ENCODE measurements at regions of chr1 and their contacts with region 1.

Region 1: DNA sequence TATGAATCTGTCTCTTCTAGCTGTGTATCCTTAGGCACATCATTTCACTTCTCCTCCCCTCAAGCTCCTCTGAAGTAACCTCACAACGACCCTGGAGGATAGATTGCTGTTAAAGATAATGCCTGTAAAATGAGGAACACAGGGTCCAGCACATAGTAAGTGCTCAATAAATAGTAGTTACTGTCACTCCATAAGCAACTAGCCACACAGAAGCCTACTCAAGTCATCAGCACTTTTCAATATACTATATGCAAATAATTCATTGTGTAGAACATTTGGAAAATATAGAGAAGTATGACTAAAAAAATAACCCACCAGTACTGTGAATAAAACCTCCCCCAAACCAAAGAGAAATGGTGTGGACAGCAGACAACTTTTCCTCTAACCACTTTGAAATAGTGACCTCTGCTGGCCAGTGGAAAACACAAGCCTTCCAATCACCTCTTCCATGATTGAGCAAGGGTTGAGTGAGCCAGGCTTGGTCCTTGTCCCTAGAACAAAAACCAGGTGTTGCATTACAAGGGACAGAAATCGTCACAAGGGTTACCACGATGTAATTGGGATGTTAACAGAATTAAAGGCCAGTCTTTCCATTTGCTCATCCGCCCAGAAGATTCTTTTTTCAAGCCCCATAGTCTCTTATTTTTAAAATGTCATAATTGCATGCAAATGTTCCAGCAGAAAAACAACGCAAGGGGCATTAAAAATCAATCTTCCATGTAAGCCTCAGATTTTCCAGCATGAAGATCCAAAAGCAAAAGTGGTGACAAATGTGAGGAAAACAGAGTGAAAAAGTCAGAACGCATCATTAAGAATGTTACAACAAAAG is 15.7 kb upstream of the GLIS1 start:
- DNase-seq: peak in 1 of 2 experiments; percentile 16
- H3K4me3 ChIP-seq: no peak overlapping the region
- H3K27ac ChIP-seq: no peak overlapping the region
- H3K4me1 ChIP-seq: no peaks in the 10 kb centered on the region
- H3K27me3 ChIP-seq: no peaks in the 10 kb centered on the region
- CTCF ChIP-seq: peak; percentile 77

Region 2: GRCh38 chr1:53465080-53465479 is 289.6 kb before region 1 on chr1:
- CTCF ChIA-PET with region 1: interaction called, 14 read pairs
- POLR2A ChIA-PET with region 1: no interaction called
- intact Hi-C with region 1: no loop called
- DNase-seq: peak in 1 of 2 experiments; percentile 28
- H3K4me3 ChIP-seq: no peak overlapping the region
- H3K27ac ChIP-seq: no peak overlapping the region
- H3K4me1 ChIP-seq: no peaks in the 10 kb centered on the region
- H3K27me3 ChIP-seq: no peaks in the 10 kb centered on the region
- CTCF ChIP-seq: no peak

Region 3: DNA sequence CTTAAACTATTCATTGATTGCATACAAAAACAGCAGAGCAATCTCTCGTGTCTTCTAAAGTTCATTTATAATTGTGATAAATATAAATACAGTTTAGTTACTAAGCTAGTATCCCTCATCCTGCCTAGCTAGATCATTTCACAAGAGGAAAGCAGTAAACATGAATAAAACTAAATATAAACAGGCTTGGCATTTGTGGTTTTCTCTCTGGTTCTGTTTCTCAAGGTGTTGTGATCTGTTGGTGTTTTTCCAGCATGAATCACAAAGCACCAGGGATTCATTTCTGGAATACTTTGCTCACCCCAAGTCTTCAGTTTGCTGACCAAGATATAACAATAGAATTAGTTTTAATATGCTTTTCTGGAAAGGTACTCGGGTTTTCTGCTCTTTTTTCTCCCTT is 16.9 kb after region 1 on chr1:
- CTCF ChIA-PET with region 1: interaction called, 13 read pairs
- POLR2A ChIA-PET with region 1: no interaction called
- intact Hi-C with region 1: no loop called
- DNase-seq: no peak
- H3K4me3 ChIP-seq: no peak overlapping the region
- H3K27ac ChIP-seq: no peak overlapping the region
- H3K4me1 ChIP-seq: no peaks in the 10 kb centered on the region
- H3K27me3 ChIP-seq: no peaks in the 10 kb centered on the region
- CTCF ChIP-seq: no peak